Left cardiac atrium (tissue), 4 donors: ENCODE measurements at regions of chr2 and their contacts with region 1.

Region 1: DNA sequence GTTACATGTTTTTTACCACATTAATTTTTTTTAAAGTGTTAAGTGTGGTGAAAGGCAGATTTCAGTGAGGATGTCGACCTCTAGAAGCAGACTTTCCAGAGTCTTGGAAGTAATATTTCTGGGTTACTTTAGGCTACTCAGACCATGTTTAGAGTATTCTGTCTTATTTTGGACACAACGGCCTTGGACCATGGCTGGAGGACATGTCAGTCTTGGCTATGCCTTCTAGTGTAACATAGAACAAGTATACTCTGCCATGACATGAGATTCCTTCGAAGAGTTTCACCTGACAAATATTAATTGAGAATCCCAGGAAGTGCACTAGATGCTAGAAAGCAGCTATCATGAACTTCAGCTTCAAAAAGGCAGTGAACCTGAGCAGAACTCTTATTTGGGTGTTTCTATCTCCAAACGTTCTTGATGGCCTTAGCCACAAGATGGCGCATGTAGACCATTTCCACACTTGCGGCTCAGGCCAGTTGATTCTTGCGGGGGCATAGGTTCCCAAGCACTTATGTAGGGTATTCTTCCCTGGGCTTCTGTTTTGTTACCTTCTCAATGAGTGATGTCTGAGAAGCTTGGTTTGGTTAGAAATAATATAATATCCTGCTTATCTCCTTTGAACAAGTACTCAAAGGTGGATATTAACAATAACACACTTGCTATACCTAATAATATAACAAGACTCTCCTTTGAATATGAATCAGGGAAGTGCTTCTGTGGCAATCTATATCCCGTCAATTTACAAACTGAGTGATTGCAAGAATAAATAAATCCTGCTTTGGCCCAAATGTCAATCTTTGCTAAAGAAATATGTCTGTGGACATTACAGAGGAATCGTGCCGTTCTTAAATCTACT is 62.0 kb downstream of the CACNB4 start:
- DNase-seq: peak; percentile 70
- ATAC-seq: peak; percentile 71 to 79

Region 2: DNA sequence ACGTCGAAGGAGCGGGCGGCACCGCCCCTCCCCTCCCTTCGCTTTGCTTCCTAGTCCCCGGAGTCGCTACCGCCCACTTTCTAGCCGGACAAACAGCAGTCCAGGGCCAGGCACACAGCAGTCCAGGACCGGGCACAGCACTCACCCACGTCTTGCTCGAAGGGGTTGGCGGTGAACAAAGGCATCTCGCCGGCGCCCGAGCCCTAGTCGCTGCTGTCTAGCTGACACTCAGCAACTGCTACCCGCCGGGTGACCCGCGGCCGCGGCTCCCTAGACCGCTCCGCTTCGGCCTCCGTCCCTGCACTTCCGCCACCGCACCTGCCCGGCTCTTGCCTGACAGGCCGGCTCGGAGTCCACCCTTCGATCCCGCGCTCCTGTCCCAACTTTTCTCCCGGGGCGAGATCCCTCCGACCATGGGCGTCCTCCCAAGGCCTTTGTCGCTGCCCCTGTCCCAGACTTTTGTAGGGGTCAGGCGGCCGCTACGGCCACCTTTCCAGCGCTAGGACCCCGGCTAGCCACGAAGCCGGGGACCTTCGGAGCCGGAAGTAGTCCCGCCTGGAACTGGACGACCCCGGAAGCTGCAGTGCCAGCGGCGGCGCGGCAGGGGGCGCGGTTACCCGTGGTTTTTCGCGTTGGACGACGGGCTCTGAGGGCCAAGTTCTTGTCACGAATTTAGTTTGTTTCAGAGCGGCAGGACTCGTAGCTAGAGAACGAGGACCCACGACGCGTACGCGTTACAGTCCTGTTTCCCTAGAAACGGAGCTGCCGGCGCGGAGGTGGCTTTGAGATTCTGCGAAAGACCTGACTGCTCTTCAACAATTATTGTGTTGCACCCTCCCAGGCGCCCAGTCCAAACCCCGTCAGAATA is 138.9 kb after region 1 on chr2 and contains the start of gene STAM2:
- intact Hi-C with region 1: loop called (anchors 5 kb)
- DNase-seq: peak; percentile 92
- ATAC-seq: peak; percentile 93 to 94
- total RNA-seq, gene STAM2: 25.9 to 27.7 TPM

Region 3: GRCh38 chr2:152627351-152627957 is 590.6 kb after region 1 on chr2:
- intact Hi-C with region 1: loop called in 1 of 2 experiments (anchors 5 kb)
- DNase-seq: no peak
- ATAC-seq: peak in 1 of 2 donors; percentile 63

Region 4: GRCh38 chr2:153519257-153519875 is 1482.5 kb after region 1 on chr2:
- intact Hi-C with region 1: loop called in 1 of 2 experiments (anchors 5 kb)
- DNase-seq: peak; percentile 49
- ATAC-seq: no peak